ENCODE measurements at regions of chr6 and their contacts with region 1.

Region 1: DNA sequence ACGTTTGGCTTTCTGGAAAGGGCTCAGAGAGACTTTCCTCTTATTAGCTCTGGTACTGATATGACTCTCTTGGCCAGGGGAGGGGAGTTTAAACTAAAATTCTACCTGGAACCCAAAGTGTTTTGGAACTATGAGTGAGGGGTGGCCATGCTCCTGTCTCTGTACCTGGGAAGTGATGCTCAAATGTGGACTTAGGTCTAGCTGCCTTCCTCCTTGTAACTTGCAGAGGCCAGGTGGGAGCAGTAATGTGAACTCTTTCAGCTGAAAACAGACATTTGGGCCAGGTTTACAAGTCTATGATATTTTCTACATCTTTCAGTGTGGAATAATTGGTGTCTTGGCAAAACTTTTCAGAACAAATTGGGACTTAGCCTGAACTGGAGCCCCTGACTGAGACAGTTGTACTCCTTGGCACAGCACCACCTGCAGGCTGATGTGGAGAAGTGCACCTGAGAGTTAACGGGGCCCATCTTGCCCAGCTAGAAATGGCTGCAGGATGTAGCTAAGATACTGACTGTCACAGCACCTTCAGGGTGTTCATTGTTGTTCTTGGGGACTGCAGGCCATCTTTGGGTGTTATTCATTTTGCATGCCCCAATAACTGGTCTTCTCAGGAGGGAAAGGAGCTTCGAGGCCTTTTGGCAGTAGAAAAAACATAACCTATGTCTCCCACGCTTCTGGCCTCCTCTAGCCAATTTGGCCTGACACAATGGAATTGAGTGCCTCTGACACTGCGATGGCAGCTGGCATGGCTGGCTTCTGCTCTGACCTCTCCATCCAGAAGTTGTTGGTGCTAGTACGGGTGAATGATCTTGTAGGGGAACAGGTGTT is 37.1 kb downstream of the CD109 start:
- DNase-seq: peak; percentile 52
- CTCF ChIP-seq: peak; percentile 95

Region 2: GRCh38 chr6:73491377-73491776 is 241.7 kb before region 1 on chr6:
- in situ Hi-C with region 1: no loop called
- DNase-seq: no peak
- CTCF ChIP-seq: no peak

Region 3: GRCh38 chr6:73811706-73812105 is 78.6 kb after region 1 on chr6:
- in situ Hi-C with region 1: no loop called
- DNase-seq: no peak
- CTCF ChIP-seq: no peak

Region 4: DNA sequence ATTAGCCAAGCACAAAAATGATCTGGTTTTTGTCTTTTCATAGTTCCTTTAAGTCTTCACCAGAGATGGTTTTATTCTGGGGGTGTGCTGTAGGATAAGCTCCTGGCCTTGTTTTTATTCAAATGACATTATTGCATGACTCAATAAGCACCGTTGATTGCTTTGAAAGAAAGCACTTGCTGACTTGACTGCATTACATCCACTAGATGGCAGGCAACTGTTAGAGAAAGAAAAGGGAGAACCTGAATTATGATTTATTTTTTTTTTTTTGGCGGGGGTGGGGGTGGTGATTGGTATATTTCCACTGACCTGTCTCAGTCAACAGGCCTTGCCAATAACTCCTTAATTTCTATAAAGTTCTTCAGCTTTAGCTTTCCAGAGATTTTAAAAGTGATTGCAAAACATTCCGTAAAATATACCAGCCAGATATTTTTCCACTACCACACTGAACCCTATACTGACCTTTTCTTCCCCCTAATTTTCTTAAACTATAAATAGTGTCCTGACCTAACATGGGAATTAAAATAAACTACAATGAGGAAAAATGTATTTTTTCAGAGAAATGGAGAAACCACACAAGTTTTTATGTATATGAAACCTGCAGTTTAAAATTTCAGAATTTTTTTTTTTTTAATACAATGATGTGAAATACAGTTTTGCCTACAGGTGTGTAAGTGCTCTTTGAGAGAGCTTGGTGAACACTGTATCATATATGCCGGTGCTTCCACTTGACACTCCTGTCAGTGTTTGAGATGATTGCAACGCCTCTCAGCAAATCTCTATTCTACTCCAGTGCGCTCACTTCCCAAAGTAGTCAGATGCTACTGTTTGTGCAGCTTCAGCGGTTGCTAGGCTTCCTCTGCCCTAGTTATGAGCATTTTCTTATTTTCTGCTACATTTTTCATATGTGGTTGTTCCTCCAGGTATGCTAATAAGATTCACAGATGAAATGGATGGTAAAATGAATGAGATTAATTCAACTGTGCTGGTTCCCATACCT is 237.2 kb after region 1 on chr6:
- in situ Hi-C with region 1: loop called (anchors 25 kb)
- DNase-seq: peak; percentile 29
- CTCF ChIP-seq: peak; percentile 49

Region 5: GRCh38 chr6:74091136-74091793 is 358.2 kb after region 1 on chr6:
- in situ Hi-C with region 1: loop called (anchors 25 kb)
- DNase-seq: peak; percentile 24
- CTCF ChIP-seq: peak; percentile 65